ENCODE measurements at regions of chr18 and their contacts with region 1.

Region 1: GRCh38 chr18:10265560-10266333 is 188.7 kb upstream of the APCDD1 start:
- DNase-seq: no peak
- H3K4me3 Mint-ChIP-seq: no peak overlapping the region
- H3K27ac Mint-ChIP-seq: no peak overlapping the region
- H3K4me1 Mint-ChIP-seq: no peaks in the 10 kb centered on the region
- H3K27me3 Mint-ChIP-seq: no peaks in the 10 kb centered on the region

Region 2: DNA sequence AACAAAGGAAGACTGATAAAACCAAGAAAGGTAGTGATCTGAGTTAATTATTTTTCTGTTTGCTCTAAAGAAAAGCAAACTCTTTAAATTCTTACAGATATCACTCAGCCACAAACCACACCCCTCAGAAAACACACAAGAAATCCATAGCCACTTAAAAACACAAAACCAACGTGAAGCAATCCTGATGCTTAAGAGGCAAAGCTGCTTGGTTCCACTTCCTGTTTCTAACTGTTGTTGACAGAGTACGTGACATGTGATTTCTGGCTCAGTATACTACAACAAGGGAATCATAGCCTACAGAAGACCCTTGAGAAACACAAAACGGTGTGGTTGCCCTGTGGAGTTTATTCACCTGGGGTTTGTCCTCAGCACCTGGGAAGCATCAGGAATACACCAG is 52.2 kb before region 1 on chr18:
- CTCF ChIA-PET with region 1: no interaction called
- intact Hi-C with region 1: loop called (anchors 2 kb)
- DNase-seq: no peak
- H3K4me3 Mint-ChIP-seq: no peak overlapping the region
- H3K27ac Mint-ChIP-seq: no peak overlapping the region
- H3K4me1 Mint-ChIP-seq: peaks cover 3% of the 10 kb centered on the region
- H3K27me3 Mint-ChIP-seq: peaks cover 8% of the 10 kb centered on the region

Region 3: GRCh38 chr18:10239103-10239502 is 26.6 kb before region 1 on chr18:
- CTCF ChIA-PET with region 1: no interaction called
- intact Hi-C with region 1: no loop called
- DNase-seq: no peak
- H3K4me3 Mint-ChIP-seq: no peak overlapping the region
- H3K27ac Mint-ChIP-seq: no peak overlapping the region
- H3K4me1 Mint-ChIP-seq: no peaks in the 10 kb centered on the region
- H3K27me3 Mint-ChIP-seq: no peaks in the 10 kb centered on the region

Region 4: DNA sequence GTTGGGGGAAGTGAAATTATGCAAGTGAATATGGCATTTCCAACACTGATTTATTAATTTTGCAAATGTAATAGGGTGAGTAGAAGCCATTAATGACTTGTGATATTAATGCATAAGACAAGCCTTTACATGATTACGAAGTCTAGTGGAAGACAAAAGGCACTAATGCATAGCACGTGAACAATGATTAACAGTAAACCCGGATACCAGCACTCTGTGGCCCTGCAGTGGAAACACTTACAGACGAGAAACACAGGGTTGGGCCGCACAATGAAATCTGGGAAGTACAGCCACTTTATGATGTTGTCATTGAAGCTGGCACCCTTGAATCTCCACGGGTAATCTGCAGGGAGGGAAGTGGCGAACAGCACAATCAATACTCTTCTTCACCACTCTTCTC is 493.5 kb after region 1 on chr18:
- CTCF ChIA-PET with region 1: no interaction called
- intact Hi-C with region 1: no loop called
- DNase-seq: no peak
- H3K4me3 Mint-ChIP-seq: no peak overlapping the region
- H3K27ac Mint-ChIP-seq: no peak overlapping the region
- H3K4me1 Mint-ChIP-seq: no peaks in the 10 kb centered on the region
- H3K27me3 Mint-ChIP-seq: peaks cover 8% of the 10 kb centered on the region

Measured in activated naive CD4-positive, alpha-beta T cell treated with anti-CD3 and anti-CD28 coated beads for 36 hours (primary cell).